Mammary epithelial cell (primary cell): ENCODE measurements at regions of chr20 and their contacts with region 1.

Region 1: DNA sequence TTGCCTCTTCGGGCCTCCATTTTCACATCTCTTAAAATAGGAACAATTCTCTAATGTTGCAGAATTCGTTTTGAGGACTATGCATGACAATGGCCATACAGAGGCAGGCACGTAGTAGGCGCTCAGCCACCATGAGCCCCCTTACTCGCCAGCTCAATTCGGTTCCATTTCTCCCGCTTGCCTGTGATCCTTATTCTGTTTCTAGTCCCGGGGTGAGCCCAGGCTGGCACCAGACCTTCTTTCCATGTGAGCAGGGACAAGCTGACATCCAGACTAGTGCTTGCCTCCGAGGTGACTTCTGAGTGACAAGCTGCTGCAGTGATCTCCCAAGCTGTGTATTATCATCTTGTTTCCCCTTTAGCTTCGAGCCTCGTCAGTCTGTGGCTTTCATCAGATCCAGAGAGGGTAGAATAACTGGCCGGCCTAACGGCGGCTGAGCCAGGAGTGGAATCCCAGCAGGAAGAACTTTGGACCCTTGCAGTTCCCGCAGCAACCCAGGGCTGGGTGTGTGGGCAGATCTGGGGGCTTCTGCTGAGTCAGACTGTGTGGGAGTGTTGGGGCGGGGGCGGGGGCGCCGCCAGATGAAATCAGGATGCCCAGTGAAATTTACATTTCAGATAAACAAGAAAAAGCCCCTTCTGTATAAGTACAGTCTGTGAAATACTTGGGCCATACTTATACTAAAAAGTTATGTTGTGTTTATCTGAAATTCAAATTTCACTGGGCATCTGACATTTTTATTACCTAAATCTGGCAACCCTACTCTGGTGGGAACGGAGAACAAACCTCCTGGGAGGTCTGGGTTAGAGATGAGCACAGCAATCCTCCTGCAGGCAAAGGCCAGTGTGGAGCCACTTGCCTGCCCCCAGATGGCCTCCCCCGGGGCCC is 10.9 kb downstream of the BANF2 start:
- DNase-seq: no peak
- H3K4me3 ChIP-seq: no peak overlapping the region
- H3K27ac ChIP-seq: no peak overlapping the region
- H3K4me1 ChIP-seq: no peaks in the 10 kb centered on the region
- H3K27me3 ChIP-seq: no peaks in the 10 kb centered on the region
- CTCF ChIP-seq: no peak

Region 2: GRCh38 chr20:17654649-17655285 is 55.9 kb before region 1 on chr20:
- CTCF ChIA-PET with region 1: no interaction called
- dilution Hi-C with region 1: no loop called
- in situ Hi-C with region 1: loop called in 1 of 2 experiments (anchors 10 kb)
- intact Hi-C with region 1: no loop called
- DNase-seq: no peak
- H3K4me3 ChIP-seq: no peak overlapping the region
- H3K27ac ChIP-seq: no peak overlapping the region
- H3K4me1 ChIP-seq: peaks cover 6% of the 10 kb centered on the region
- H3K27me3 ChIP-seq: no peaks in the 10 kb centered on the region
- CTCF ChIP-seq: peak; percentile 52 to 57

Region 3: DNA sequence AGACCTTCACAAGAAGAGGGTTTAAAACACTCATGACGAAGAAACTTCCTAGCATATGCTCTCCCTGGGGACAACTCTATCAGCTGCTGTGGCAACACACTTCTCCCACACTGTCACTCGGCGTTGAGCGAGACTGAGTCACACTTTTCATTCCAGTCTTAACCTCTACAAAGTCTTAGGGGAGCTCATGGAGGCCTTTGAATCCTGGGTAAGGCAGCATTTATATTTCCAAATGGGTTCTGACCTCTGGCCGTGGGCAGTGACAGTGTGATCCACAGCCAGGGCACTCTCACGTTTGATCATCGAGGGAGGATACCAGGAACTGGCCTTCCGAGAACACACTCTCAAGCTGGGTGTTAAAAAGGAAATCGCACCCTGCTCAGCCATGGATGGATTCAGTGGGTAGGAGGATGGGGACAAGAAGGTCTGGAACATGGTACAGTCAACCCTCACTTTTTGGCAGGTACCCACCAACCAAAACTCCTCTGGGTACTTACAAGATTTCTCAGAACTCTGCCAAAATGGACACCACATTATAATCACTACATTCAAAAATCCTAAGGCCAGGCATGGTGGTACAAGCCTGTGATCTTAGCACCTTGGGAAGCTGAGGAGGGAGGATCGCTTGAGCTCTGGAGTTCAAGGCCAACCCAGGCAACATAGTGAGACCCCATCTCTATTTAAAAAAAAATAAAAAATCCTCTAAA is 48.1 kb before region 1 on chr20:
- CTCF ChIA-PET with region 1: no interaction called
- dilution Hi-C with region 1: loop called (anchors 5 kb)
- in situ Hi-C with region 1: loop called in 1 of 2 experiments (anchors 10 kb)
- intact Hi-C with region 1: no loop called
- DNase-seq: no peak
- H3K4me3 ChIP-seq: no peak overlapping the region
- H3K27ac ChIP-seq: no peak overlapping the region
- H3K4me1 ChIP-seq: no peaks in the 10 kb centered on the region
- H3K27me3 ChIP-seq: no peaks in the 10 kb centered on the region
- CTCF ChIP-seq: no peak

Region 4: DNA sequence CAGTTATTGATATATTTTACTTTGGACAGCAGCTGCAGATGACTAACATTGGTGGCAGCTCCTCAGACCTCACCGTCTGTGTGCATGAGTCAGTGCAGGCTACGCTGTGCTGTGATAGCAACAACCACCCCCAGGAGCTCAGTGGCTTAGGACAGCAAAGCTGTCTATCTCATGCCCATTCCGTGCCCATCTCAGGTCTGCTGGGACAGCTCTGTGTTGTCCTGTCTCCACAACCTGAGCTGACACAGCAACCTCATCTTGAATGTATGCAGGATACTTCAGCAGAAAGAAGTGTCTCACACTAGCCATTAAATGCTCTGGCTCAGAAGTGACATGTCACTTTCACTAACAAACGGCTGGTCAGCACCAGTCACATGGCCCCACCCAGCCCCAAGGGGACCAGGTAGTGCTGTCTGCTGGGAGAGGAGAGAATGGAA is 36.8 kb after region 1 on chr20:
- CTCF ChIA-PET with region 1: no interaction called
- dilution Hi-C with region 1: loop called (anchors 5 kb)
- in situ Hi-C with region 1: no loop called
- intact Hi-C with region 1: no loop called
- DNase-seq: peak; percentile 77
- H3K4me3 ChIP-seq: no peak overlapping the region
- H3K27ac ChIP-seq: no peak overlapping the region
- H3K4me1 ChIP-seq: peaks cover 12% of the 10 kb centered on the region
- H3K27me3 ChIP-seq: no peaks in the 10 kb centered on the region
- CTCF ChIP-seq: peak in 1 of 2 donors; percentile 6

Region 5: DNA sequence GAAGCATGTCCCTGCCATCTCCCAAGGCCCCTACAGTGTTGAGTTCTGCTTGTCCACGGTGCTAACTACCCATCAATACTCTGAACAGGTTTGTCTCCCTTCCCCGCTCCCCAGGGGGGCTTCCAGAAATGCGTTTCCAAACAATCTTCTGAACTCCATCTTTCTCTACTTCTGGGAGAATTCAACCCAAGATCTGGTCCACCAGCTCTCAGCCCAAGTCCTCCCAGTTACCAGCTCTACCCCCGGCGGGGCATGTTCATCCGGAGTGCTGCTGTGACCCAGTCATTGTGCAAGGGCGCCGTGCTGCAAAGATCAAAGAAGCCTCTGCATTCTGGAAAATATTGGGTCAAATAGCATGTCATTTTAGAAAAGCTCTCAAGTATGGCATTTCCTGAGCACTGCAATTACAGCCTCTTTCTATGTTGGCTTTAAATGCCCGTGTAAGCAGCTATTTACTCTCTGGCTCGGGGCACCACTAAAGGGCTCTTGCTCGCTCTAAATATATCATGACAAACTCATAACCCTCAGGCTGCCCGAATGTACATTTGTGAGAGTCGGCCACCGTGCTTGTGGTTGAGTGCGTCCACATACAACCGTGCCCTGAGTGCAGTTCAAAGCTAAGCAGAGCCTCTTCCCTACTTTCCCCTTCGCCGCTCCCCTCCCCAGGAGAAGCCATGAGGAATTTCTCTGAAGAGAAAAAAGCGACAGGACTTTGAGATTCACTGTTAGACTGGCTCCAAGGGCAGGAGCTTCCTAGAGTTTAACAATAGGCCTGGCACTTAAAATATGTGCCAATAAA is 60.8 kb after region 1 on chr20:
- CTCF ChIA-PET with region 1: no interaction called
- dilution Hi-C with region 1: no loop called
- in situ Hi-C with region 1: loop called in 1 of 2 experiments (anchors 10 kb)
- intact Hi-C with region 1: no loop called
- DNase-seq: no peak
- H3K4me3 ChIP-seq: no peak overlapping the region
- H3K27ac ChIP-seq: no peak overlapping the region
- H3K4me1 ChIP-seq: no peaks in the 10 kb centered on the region
- H3K27me3 ChIP-seq: no peaks in the 10 kb centered on the region
- CTCF ChIP-seq: no peak

Region 6: GRCh38 chr20:17796091-17796563 is 85.5 kb after region 1 on chr20:
- CTCF ChIA-PET with region 1: no interaction called
- dilution Hi-C with region 1: loop called (anchors 5 kb)
- in situ Hi-C with region 1: no loop called
- intact Hi-C with region 1: no loop called
- DNase-seq: no peak
- H3K4me3 ChIP-seq: no peak overlapping the region
- H3K27ac ChIP-seq: no peak overlapping the region
- H3K4me1 ChIP-seq: peaks cover 13% of the 10 kb centered on the region
- H3K27me3 ChIP-seq: no peaks in the 10 kb centered on the region
- CTCF ChIP-seq: no peak

Region 7: GRCh38 chr20:17969884-17970409 is 259.3 kb after region 1 on chr20:
- CTCF ChIA-PET with region 1: no interaction called
- dilution Hi-C with region 1: no loop called
- in situ Hi-C with region 1: no loop called
- intact Hi-C with region 1: no loop called
- DNase-seq: peak; percentile 55
- H3K4me3 ChIP-seq: peak overlapping the region; percentile 88 to 93 (median 91)
- H3K27ac ChIP-seq: peak overlapping the region; percentile 98
- H3K4me1 ChIP-seq: peaks cover 16% of the 10 kb centered on the region
- H3K27me3 ChIP-seq: no peaks in the 10 kb centered on the region
- CTCF ChIP-seq: no peak